Right ventricle myocardium inferior (tissue), 1 donor: ENCODE measurements at regions of chr15 and their contacts with region 1.

Region 1: GRCh38 chr15:63041974-63042819 is at the start of gene TPM1:
- DNase-seq: peak; percentile 92
- ATAC-seq: peak; percentile 82
- total RNA-seq, gene TPM1: 13,805 TPM

Region 2: GRCh38 chr15:62637574-62637897 is 404.7 kb before region 1 on chr15:
- intact Hi-C with region 1: no loop called
- DNase-seq: no peak
- ATAC-seq: no peak

Region 3: DNA sequence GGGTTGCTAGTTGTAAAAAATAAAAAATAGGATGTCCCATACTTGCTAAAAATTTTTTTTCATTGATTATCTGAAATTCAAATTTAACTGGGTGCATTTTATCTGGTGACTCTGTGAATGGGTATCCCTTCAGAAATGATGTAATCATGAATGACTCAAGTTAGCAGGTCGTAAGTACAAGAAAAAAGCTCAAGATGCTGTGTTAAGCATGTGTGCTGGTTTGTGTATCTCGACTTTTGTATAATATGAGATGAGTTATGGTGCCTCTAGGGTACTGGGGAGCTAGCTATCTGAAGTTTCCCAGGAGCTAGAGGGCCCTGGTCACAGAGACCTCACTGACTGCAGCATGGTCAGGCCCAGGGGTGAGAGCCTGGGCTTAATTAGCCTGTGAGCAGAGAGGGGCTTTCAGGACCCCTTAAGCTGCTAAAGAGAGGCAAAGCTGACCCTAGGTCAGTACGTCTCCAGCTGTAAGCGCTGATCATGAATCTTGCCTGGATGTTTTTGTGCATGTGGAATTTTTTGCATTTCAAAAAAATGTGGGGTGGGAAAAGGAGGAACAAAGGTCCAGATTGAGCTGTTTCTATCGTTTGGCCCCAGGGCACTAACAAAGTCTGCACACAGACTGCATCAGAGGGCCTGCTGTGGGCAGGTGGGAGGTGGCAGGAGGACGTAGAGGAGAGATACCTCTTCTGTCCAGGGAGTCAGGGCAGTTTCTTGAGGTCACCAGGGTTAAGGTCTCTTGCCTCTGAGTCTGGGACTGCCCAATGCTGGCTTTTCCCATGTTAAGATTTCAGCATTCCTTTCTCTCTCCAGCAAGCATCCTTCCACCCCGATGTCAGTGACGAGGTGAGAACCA is 232.9 kb before region 1 on chr15:
- intact Hi-C with region 1: no loop called
- DNase-seq: no peak
- ATAC-seq: no peak

Region 4: GRCh38 chr15:62847900-62848489 is 194.2 kb before region 1 on chr15:
- intact Hi-C with region 1: loop called (anchors 2 kb)
- DNase-seq: peak; percentile 80
- ATAC-seq: peak; percentile 73

Region 5: GRCh38 chr15:62928242-62928995 is 113.8 kb before region 1 on chr15:
- intact Hi-C with region 1: loop called (anchors 2 kb)
- DNase-seq: no peak
- ATAC-seq: peak; percentile 79

Region 6: DNA sequence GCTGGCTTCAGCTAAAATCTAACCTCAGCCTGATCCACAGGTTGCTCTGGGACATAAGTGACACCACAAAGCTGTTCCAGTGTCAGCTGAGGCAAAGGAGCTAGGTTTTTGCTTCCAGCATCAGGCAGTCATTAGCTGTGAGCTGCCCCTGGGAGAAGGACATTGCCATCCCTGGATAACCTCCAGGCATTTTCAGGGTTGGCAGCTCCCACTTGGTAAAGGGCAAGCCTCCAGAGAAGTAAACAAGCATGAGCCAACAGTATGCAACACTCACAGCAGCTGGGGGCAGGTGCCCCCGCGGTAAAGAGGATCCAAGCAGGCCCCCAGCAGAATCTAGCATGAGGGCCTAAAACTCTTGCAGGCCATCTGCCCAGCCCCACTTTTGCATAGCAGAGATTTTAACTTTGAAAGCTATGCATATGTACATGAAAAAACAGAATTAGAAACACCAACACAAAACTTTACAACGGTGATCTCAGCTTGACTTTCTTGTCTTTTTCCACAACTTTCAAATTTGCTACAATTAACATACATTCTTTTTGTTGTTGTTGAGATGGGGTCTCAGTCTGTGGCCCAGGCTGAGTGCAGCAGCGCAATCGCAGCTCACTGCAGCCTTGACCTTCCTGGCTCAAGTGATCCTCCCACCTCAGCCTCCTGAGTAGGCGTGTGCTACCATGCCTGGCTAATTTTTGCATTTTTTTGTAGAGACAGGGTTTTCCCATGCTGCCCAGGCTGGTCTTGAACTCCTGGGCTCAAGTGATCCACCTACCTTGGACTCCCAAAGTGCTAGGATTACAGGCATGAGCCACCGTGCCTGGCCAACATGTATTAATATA is 83.5 kb before region 1 on chr15:
- intact Hi-C with region 1: loop called (anchors 5 kb)
- DNase-seq: no peak
- ATAC-seq: peak; percentile 81

Region 7: DNA sequence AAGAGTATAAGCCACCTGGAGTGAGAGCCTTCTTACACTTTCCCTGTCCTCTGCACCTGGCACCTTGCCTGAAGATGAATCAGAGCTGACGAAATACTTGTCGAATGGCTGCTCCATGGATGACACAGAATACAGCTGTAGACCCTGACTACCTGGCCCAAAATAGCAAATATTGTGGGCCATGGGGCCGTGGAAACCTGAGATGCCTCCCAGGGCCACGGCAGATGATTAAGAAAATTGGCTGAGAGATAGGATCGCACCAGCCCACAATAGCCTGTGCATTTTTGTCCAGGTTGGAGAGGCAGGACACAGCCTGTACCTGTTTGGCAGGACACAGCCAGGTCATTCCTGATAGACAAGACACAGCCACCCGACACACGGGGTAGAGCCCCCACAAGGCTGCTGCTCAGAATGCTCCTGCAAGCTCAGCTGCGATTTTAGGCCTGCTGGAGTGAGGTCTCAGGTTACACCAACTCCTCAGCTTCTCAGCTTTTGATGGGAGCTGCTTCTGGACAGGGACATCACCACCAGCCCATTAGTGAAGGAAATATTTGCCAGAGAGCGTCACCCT is 22.6 kb before region 1 on chr15:
- intact Hi-C with region 1: no loop called
- DNase-seq: no peak
- ATAC-seq: no peak

Region 8: DNA sequence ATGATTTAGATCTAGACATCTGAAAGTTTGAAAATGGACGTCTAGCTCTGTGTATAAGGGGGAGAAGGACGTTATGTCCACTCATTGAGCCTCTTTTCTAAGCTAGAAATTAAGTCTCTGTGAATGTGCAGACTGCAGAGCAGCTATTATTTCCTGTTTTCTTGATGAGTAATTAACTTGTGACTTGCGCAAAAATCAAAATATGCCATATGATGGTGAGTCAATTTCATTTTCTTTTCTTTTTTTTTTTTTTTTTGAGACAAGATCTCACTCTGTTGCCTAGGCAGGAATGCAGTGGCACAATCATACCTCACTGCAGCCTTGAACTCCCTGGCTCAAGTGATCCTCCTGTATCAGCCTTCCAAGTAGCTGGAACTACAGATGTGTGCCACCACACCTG is 93.6 kb after region 1 on chr15:
- intact Hi-C with region 1: no loop called
- DNase-seq: no peak
- ATAC-seq: no peak